ENCODE measurements at regions of chr4 and their contacts with region 1.

Region 1: DNA sequence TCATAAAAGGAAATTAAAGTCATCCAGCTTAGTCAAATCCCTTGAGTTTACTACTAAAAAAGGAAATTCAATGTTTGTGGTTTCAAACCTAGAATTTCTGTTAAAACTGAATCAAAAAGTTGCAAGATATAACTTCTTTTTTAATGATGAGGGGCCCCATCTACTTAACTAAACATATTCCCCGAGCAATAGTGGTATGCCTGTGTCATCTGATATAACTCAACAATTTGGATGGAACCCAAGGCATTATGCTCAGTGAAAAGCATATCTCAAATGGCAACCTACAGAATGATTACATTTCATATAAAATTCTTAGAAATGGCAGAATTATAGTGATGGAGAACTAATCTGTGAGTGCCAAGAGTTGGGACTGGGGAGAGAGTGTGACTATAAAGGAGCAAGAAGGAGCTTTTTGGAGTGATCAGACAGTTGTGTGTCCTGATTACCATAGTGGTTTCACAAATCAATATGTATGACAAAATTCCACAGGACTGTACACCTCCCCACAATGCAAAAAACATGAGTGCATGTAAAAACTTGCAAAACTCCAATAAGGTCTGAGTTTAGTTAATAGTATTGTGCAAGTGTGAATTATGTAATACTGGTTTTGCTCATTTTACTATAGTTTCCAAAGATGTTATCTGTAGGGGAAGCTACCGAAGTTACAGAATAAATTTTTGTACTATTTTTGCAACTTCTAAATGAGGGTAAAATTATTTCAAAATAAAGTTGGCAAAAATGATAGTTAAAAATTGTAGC is 323.2 kb downstream of the ARHGAP24 start:
- DNase-seq: no peak
- ATAC-seq: no peak
- H3K4me3 ChIP-seq: no peak overlapping the region
- H3K27ac ChIP-seq: no peak overlapping the region
- H3K4me1 ChIP-seq: peaks cover 0 to 4% of the 10 kb centered on the region in 2 experiments; a peak in 3 of 4 replicates
- H3K27me3 ChIP-seq: no peaks in the 10 kb centered on the region
- CTCF ChIP-seq: no peak
- POLR2A ChIP-seq: no peak
- RAD21 ChIP-seq: no peak

Region 2: GRCh38 chr4:85084380-85085094 is 713.7 kb before region 1 on chr4:
- CTCF ChIA-PET with region 1: interaction called, 15 read pairs
- POLR2A ChIA-PET with region 1: no interaction called
- RAD21 ChIA-PET with region 1: no interaction called
- intact Hi-C with region 1: no loop called
- DNase-seq: peak; percentile 75
- ATAC-seq: peak; percentile 79
- H3K4me3 ChIP-seq: no peak overlapping the region
- H3K27ac ChIP-seq: no peak overlapping the region
- H3K4me1 ChIP-seq: no peaks in the 10 kb centered on the region
- H3K27me3 ChIP-seq: no peaks in the 10 kb centered on the region
- CTCF ChIP-seq: peak; percentile 49 to 71 (median 70); a peak in 5 of 6 replicates
- POLR2A ChIP-seq: no peak
- RAD21 ChIP-seq: peak; percentile 75

Region 3: DNA sequence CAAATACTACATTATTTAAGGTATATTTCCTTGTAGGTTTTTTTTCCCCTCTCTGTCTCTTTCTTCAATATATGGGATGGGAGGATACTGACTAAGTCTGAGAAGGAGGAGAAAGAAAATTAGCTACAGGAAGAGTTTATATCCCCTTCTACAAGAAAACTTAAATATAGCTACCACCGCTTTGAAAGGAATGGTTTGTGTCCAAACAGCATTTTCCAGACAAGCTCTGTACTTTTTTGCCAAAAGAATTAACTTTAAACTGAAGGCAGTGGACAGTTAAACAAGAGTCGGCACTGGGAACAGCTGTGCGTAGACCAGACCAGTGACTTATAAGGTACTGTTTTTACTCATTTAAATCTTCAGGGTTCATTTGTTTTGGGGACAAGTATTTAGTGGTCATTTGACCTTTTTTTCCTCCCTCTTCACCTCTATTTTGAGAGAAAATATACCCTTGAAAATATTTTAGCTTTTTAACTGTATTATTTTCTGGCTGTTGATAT is 19.5 kb before region 1 on chr4:
- CTCF ChIA-PET with region 1: interaction called, 17 read pairs
- POLR2A ChIA-PET with region 1: no interaction called
- RAD21 ChIA-PET with region 1: no interaction called
- intact Hi-C with region 1: no loop called
- DNase-seq: no peak
- ATAC-seq: no peak
- H3K4me3 ChIP-seq: no peak overlapping the region
- H3K27ac ChIP-seq: no peak overlapping the region
- H3K4me1 ChIP-seq: peaks cover 0 to 10% of the 10 kb centered on the region in 2 experiments; a peak in 1 of 4 replicates
- H3K27me3 ChIP-seq: no peaks in the 10 kb centered on the region
- CTCF ChIP-seq: no peak
- POLR2A ChIP-seq: no peak
- RAD21 ChIP-seq: no peak

Region 4: DNA sequence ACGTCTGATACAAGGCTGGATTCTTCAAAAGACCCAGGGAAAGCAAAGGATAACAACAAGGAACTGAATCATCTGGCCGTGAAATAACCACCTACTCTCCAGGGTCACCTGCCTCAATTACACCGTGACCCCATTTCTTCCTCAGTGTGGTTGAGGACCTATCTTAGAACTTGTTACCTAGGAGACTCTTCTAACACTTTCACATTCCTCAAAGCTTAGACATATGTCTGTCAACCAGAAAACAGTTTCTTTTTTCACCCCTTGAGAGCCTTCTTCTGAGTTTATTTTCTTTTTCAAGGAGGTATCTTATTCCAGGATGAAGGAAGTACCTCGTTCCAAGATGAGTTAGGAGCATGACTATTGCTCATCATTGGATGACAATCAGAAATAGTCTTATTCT is 14.6 kb after region 1 on chr4:
- CTCF ChIA-PET with region 1: interaction called, 19 read pairs
- POLR2A ChIA-PET with region 1: no interaction called
- RAD21 ChIA-PET with region 1: no interaction called
- intact Hi-C with region 1: no loop called
- DNase-seq: no peak
- ATAC-seq: no peak
- H3K4me3 ChIP-seq: no peak overlapping the region
- H3K27ac ChIP-seq: no peak overlapping the region
- H3K4me1 ChIP-seq: no peaks in the 10 kb centered on the region
- H3K27me3 ChIP-seq: no peaks in the 10 kb centered on the region
- CTCF ChIP-seq: no peak
- POLR2A ChIP-seq: no peak
- RAD21 ChIP-seq: no peak

Region 5: DNA sequence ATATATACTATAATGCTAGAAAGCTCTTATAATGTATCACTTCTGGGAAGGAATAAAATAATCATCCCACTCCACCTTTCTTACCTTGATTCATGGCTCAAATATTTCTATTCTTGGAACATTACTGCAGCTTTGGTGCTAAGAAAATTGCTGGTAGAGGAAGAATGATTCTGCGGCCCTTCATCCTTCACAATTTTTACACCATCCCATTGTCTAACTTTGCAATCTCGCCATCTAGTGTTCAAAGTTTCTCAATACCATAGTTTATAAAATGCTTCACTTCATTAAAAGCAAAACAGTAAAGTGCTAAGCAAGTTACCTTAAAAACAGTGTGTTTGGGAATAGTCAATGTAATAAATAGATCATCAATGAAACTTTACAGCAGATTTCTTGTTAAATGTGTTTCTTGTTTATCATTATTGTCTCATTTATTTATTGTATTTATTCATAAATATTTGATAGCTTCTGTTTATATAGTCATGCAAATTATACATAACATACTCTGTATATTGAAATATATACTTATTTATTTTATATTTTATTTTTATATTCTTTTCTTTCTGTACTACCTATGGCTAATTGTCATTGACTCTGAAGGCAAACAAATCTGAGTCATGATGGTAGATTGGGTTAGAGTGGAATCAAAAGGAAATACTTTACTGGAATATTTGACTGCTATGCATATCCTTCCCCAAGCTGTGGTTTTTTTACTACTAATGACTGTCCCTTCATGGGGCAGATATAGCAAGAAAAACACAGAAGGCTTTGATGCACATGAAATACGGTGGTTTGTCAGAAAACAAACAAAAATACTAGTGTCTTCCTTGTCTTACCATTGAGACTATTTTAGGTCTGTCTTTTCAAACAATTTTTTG is 171.0 kb after region 1 on chr4:
- CTCF ChIA-PET with region 1: interaction called, 91 read pairs
- POLR2A ChIA-PET with region 1: interaction called, 9 read pairs
- RAD21 ChIA-PET with region 1: interaction called, 7 to 11 read pairs
- intact Hi-C with region 1: loop called (anchors 1 kb)
- DNase-seq: no peak
- ATAC-seq: peak; percentile 74
- H3K4me3 ChIP-seq: no peak overlapping the region
- H3K27ac ChIP-seq: no peak overlapping the region
- H3K4me1 ChIP-seq: no peaks in the 10 kb centered on the region
- H3K27me3 ChIP-seq: no peaks in the 10 kb centered on the region
- CTCF ChIP-seq: peak; percentile 45 to 79 (median 66)
- POLR2A ChIP-seq: no peak
- RAD21 ChIP-seq: peak; percentile 76

Measured in HCT116 (cell line).